ENCODE measurements at regions of chr11 and their contacts with region 1.

Region 1: DNA sequence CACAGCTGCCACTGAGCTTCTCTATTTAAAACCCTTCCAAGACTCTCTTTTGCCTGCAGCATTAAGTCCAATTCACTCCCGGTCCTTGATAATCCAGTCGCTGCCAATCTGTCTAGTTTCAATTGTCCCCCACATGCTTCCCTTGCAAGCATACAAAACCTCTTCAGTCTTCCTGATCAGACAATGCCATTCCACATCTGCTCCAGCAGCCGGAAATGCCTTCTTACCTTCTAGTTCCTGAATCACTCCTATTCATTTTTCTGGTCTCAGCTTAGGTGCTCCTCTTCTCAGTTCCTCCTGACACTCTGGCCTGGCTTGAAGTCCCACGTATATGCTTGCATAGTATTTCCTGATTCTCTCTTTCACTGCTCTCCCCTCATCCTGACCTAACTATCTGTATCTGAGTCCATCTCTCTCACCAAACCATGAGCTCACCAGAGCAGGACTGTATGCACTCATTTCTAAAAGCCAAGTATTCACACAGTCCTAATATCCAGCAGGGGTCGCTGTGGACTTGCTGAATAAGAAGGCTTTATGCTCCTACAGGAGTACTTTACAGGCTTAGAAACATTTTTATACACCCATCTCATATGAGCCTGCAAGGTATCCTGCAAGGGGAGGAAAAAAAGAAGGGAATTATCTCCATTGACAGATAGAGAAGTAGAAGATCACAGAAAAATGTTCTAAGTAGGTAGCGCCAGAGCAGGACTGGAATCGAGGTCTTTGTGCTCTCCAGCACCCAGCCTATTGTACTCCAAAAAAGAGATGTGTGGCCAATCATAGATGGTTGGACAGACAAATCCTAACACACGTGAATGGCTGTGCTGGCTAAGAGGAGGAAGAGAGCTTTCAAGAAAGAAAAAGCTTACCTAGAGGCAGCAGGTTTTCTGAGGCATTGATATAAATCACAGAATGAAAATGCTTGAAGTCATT is 19.2 kb downstream of the XRRA1 start:
- DNase-seq: no peak
- ATAC-seq: peak; percentile 72
- H3K4me3 Mint-ChIP-seq: no peak overlapping the region
- H3K27ac Mint-ChIP-seq: no peak overlapping the region
- H3K4me1 Mint-ChIP-seq: no peaks in the 10 kb centered on the region
- H3K27me3 Mint-ChIP-seq: no peaks in the 10 kb centered on the region
- CTCF ChIP-seq: peak; percentile 65

Region 2: GRCh38 chr11:74820763-74821162 is 108.9 kb before region 1 on chr11:
- CTCF ChIA-PET with region 1: no interaction called
- POLR2A ChIA-PET with region 1: no interaction called
- intact Hi-C with region 1: no loop called
- DNase-seq: no peak
- ATAC-seq: no peak
- H3K4me3 Mint-ChIP-seq: no peak overlapping the region
- H3K27ac Mint-ChIP-seq: no peak overlapping the region
- H3K4me1 Mint-ChIP-seq: peaks cover 5% of the 10 kb centered on the region
- H3K27me3 Mint-ChIP-seq: no peaks in the 10 kb centered on the region
- CTCF ChIP-seq: no peak

Region 3: DNA sequence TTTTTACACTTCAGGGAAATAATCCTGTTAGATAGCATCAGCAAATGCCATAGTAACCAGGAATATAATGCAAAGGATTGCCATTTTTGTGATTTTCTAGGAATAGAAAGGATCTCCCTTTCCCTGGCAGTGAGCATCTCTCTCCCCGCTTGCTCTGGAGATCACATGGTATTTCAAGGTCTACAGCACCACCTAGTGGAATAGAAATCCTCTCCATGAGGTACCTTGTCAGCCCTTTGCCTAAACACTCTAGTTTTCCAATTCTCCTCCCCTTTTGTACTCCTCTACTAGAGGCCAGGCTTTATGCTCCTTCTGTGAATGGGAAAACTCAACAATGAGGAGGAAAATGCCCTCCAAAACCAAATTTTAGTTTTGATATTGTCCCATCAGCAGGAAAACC is 59.2 kb before region 1 on chr11:
- CTCF ChIA-PET with region 1: no interaction called
- POLR2A ChIA-PET with region 1: interaction called, 12 read pairs
- intact Hi-C with region 1: no loop called
- DNase-seq: no peak
- ATAC-seq: no peak
- H3K4me3 Mint-ChIP-seq: no peak overlapping the region
- H3K27ac Mint-ChIP-seq: no peak overlapping the region
- H3K4me1 Mint-ChIP-seq: no peaks in the 10 kb centered on the region
- H3K27me3 Mint-ChIP-seq: no peaks in the 10 kb centered on the region
- CTCF ChIP-seq: no peak

Region 4: GRCh38 chr11:75031771-75032549 is 102.3 kb after region 1 on chr11:
- CTCF ChIA-PET with region 1: interaction called, 55 read pairs
- POLR2A ChIA-PET with region 1: no interaction called
- intact Hi-C with region 1: loop called (anchors 1 kb)
- DNase-seq: peak; percentile 48
- ATAC-seq: peak; percentile 52
- H3K4me3 Mint-ChIP-seq: no peak overlapping the region
- H3K27ac Mint-ChIP-seq: no peak overlapping the region
- H3K4me1 Mint-ChIP-seq: peaks cover 7% of the 10 kb centered on the region
- H3K27me3 Mint-ChIP-seq: peaks cover 3% of the 10 kb centered on the region
- CTCF ChIP-seq: no peak

Region 5: GRCh38 chr11:75204685-75205563 is 275.2 kb after region 1 on chr11:
- CTCF ChIA-PET with region 1: interaction called, 11 read pairs
- POLR2A ChIA-PET with region 1: no interaction called
- intact Hi-C with region 1: loop called (anchors 1 kb)
- DNase-seq: peak; percentile 49
- ATAC-seq: peak; percentile 56
- H3K4me3 Mint-ChIP-seq: no peak overlapping the region
- H3K27ac Mint-ChIP-seq: no peak overlapping the region
- H3K4me1 Mint-ChIP-seq: no peaks in the 10 kb centered on the region
- H3K27me3 Mint-ChIP-seq: no peaks in the 10 kb centered on the region
- CTCF ChIP-seq: no peak

Region 6: DNA sequence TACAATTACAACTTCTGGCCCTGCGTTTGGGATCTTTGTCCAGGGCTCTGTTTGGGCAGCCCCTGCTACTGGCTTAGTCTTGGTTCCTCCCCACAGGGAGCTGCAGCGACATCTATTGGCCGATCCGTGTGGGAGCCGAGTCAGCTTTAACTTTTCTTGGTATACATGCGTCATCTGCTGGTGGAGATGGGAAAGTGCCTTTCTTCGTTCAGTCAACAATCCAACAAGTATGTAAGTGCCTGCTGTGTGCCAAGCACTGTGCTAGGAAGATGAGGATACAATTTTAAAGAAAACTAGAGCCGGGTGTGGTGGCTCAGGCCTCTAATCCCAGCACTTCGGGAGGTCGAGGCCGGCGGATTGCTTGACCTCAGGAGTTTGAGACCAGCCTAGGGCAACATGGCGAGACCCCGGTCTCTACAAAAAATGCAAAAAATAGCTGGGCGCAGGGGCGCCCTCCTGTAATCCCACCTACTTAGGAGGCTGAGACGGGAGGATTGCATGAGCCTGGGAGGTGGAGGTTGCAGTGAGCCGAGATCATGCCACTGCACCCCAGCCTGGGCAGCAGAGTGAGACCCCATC is 319.1 kb after region 1 on chr11:
- CTCF ChIA-PET with region 1: interaction called, 20 read pairs
- POLR2A ChIA-PET with region 1: no interaction called
- intact Hi-C with region 1: loop called (anchors 1 kb)
- DNase-seq: peak; percentile 65
- ATAC-seq: peak; percentile 97
- H3K4me3 Mint-ChIP-seq: no peak overlapping the region
- H3K27ac Mint-ChIP-seq: no peak overlapping the region
- H3K4me1 Mint-ChIP-seq: no peaks in the 10 kb centered on the region
- H3K27me3 Mint-ChIP-seq: peaks cover 24% of the 10 kb centered on the region
- CTCF ChIP-seq: peak; percentile 100

Region 7: DNA sequence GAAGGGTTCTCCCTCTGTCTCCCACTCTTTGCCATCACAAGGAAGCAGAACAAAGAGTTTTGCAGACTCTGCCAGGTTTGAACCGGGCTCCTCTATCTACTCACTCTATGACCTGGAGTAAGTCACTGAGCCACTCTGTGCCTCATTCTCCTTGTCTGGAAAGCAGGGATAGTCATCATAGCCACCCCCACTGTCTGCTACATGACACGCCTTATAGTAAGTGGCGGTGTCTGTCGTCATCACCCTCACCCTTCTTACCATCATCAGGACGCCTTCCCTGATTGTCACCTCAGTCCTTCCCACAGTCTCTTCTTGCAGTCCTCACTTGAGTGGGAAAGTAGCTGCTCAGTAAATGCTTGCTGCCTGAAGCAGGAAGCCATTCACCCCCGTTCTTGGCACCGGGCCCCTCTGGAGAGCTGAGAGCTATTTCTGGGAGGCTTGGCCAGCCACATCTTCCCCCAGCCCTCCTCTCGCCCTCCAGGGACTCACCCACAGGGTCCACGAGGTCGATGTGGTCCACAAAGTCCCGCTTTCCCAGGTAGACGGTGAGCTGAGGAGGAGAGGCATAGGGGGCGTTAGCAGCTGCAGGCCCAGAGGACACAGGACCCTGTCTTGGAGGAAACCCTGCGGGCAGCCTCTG is 357.2 kb after region 1 on chr11:
- CTCF ChIA-PET with region 1: no interaction called
- POLR2A ChIA-PET with region 1: no interaction called
- intact Hi-C with region 1: no loop called
- DNase-seq: no peak
- ATAC-seq: no peak
- H3K4me3 Mint-ChIP-seq: no peak overlapping the region
- H3K27ac Mint-ChIP-seq: no peak overlapping the region
- H3K4me1 Mint-ChIP-seq: no peaks in the 10 kb centered on the region
- H3K27me3 Mint-ChIP-seq: peaks cover 1% of the 10 kb centered on the region
- CTCF ChIP-seq: no peak

Region 8: DNA sequence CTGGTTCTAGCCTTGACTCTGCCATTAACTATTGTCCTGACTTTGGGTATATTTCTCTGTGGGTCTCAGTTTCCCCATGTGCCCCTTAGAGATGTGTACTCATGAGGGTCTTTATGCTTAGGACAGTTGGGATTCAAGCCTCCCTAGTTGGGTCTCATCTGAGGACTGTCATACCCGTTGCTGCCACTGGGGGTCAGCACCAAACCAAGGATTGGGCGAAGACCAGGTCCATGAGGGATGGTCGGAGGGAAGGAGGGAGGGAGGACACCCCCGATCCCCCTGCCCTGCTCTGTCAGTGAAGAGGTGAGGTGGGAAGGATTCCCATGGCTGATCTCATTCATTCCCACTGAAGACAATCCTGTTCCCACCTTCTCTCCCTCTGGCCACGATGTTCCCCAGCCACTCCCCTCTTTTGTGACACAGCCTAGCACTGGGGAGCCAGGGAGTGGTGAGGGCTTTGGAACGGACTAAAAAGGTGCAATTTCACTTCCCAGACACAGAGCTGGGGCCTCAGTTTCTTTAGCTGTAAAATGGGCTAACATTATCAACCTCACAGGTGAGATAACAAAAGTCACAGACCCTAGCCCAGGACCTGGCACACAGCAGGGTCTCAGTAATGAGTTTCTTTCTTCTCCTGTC is 515.7 kb after region 1 on chr11:
- CTCF ChIA-PET with region 1: no interaction called
- POLR2A ChIA-PET with region 1: no interaction called
- intact Hi-C with region 1: no loop called
- DNase-seq: peak; percentile 69
- ATAC-seq: peak; percentile 98
- H3K4me3 Mint-ChIP-seq: no peak overlapping the region
- H3K27ac Mint-ChIP-seq: no peak overlapping the region
- H3K4me1 Mint-ChIP-seq: no peaks in the 10 kb centered on the region
- H3K27me3 Mint-ChIP-seq: no peaks in the 10 kb centered on the region
- CTCF ChIP-seq: no peak

Measured in activated B cell treated with CpG ODN at 0.5 μM for 24 hours (primary cell).